ENCODE measurements at regions of chr17 and their contacts with region 1.

Region 1: DNA sequence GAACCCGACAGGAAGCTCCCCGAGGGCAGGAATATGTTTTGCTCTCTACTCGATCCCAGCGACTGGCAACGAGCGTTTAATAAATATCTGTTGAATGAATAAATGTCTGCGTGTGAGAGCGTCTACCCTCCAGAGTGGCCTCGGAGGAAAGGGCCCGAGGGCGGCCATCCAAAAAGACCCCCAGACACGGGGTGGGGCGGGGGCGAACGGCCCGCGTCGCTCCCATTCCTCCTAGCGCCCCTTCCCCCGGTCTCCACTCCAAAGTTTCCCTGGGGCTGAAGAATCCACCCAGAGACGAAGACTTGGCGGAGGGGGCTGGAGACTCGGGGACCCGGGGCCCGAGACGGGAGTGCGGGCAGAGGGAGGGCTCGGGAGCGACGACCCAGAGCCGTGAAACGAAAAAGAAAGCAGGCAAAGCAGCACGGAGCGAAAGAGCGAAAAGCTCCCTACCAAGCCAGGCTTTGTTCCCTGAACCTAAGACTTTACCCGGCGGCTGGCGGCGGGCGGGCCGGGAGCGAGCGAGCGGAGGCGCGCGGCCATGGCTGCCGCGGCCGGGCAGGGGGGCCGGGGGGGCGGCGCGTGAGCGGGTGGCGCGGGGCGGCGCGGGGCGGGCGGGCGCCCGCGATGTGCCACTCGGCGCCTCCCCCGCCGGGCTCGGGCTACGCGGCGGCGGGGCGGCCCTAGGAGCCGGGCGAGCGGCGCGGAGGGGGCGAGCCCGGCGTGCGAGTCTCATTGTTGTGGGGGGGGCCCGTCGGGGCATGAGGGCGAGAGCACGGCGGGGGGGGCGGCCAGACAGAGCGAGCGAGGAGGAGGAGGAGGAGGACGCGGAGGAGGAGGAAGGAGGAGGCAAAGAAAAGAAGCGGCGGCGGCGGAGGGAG is at the start of gene MLLT6:
- DNase-seq: peak; percentile 71
- CTCF ChIP-seq: no peak

Region 2: DNA sequence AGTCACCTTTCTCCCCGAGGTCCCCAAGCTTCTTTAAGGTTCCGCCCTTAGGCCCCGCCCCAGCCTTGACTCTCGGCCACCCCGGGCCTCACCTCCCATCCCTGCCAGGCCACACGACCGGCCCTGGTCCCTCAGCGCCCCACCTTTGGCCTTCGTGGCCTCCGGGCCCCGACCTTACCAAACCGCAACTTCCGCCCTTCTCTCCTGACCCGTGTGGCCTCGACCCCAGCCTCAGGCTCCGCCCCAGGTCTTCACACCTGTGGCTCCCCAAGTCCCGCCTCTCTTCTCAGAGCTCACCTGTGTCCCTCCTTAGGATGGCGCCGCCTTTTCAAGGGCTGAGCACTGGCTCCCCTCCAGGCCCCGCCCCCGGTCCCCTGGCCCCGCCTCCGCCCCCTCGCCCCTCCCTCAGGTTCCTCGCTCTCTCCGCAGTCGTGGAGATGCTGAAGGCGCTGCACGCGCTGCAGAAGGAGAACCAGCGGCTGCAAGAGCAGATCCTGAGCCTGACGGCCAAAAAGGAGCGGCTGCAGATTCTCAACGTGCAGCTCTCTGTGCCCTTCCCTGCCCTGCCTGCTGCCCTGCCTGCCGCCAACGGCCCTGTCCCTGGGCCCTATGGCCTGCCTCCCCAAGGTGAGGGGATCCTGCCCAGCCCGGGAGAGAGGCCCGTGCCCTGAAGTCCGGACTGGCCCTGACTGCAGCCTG is 15.2 kb after region 1 on chr17:
- CTCF ChIA-PET with region 1: interaction called, 18 read pairs
- POLR2A ChIA-PET with region 1: interaction called, 5 read pairs
- DNase-seq: no peak
- CTCF ChIP-seq: no peak

Measured in GM10248 (cell line).